ENCODE measurements at regions of chr10 and their contacts with region 1.

Region 1: DNA sequence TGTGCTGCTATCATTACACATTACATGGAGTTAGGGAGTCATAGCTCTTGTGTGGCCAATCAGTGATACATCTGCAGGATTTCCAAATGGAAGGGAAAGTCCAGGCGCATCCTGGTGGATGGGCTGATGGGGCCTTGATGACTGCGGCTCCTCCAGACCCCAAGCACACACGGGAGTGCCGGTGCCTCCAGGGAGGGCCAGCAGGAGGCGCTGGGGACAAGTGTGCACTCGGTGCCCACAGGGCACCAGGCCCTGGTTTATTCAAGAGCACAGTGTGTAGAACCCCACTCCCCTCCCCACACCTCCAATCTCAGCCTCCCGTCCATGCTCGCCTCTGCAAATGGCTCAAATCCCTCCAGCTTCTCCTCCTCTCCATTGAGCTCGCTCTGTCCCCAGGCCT is 243.9 kb downstream of the USP6NL start:
- DNase-seq: no peak
- ATAC-seq: no peak
- H3K4me3 Mint-ChIP-seq: no peak overlapping the region
- H3K27ac Mint-ChIP-seq: no peak overlapping the region
- H3K4me1 Mint-ChIP-seq: peaks cover 10% of the 10 kb centered on the region
- H3K27me3 Mint-ChIP-seq: no peaks in the 10 kb centered on the region

Region 2: GRCh38 chr10:11345224-11346054 is 22.1 kb before region 1 on chr10:
- CTCF ChIA-PET with region 1: no interaction called
- POLR2A ChIA-PET with region 1: no interaction called
- intact Hi-C with region 1: loop called in 1 of 2 experiments (anchors 1 kb)
- DNase-seq: peak; percentile 61
- ATAC-seq: peak; percentile 88
- H3K4me3 Mint-ChIP-seq: peak overlapping the region; percentile 42
- H3K27ac Mint-ChIP-seq: no peak overlapping the region
- H3K4me1 Mint-ChIP-seq: peaks cover 8% of the 10 kb centered on the region
- H3K27me3 Mint-ChIP-seq: no peaks in the 10 kb centered on the region